Thyroid gland (tissue), 4 donors: ENCODE measurements at regions of chr5 and their contacts with region 1.

Region 1: GRCh38 chr5:172932313-172933017 is 26.8 kb upstream of the RPL26L1 start:
- DNase-seq: peak; percentile 79 to 81
- H3K4me3 ChIP-seq: no peak overlapping the region
- H3K27ac ChIP-seq: peak overlapping the region in 2 of 3 donors; percentile 27 to 67
- H3K4me1 ChIP-seq: peaks cover 4 to 20% of the 10 kb centered on the region in 2 donors
- H3K27me3 ChIP-seq: no peaks in the 10 kb centered on the region
- CTCF ChIP-seq: peak; percentile 87 to 98 (median 96)
- POLR2A ChIP-seq: no peak

Region 2: GRCh38 chr5:172713113-172713860 is 219.2 kb before region 1 on chr5:
- intact Hi-C with region 1: loop called (anchors 2 kb)
- DNase-seq: peak; percentile 58 to 67
- H3K4me3 ChIP-seq: no peak overlapping the region
- H3K27ac ChIP-seq: peak overlapping the region in 2 of 3 donors; percentile 35 to 66
- H3K4me1 ChIP-seq: peaks cover 10 to 39% of the 10 kb centered on the region in 2 donors
- H3K27me3 ChIP-seq: no peaks in the 10 kb centered on the region
- CTCF ChIP-seq: peak; percentile 72 to 93 (median 88)
- POLR2A ChIP-seq: peak in 1 of 2 donors; percentile 12

Region 3: GRCh38 chr5:173108914-173109313 is 176.4 kb after region 1 on chr5:
- intact Hi-C with region 1: no loop called
- DNase-seq: peak; percentile 4 to 17
- H3K4me3 ChIP-seq: no peak overlapping the region
- H3K27ac ChIP-seq: peak overlapping the region in 2 of 3 donors; percentile 4 to 72
- H3K4me1 ChIP-seq: peaks cover 10% of the 10 kb centered on the region in 2 donors
- H3K27me3 ChIP-seq: no peaks in the 10 kb centered on the region
- CTCF ChIP-seq: no peak
- POLR2A ChIP-seq: peak in 1 of 2 donors; percentile 13

Region 4: DNA sequence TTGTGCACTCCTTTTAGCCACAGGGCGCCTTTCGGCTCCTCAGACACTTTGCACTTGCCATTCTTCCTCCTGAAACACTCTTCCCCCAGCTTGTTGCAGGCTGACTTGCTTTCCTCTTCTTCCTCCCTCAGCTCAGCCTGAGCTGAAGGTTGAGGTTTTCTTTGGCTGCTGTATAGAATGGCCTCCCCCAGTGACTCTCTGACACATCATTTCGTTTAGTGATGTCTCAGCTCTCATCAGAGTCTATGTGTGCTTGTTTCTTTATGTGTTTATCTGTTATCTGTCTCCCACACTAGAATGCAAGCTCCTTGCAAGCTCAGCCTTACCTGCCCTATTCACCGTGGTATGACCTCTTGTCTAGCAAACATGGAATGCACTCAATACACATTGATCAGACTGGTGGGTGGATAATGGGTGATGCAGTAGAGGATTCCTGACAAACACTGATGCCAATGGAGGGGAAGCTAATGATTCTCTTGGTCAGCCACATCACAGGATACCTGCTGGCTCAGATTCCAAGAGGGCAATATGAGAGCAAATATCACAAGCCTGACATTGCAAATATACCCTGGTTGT is 508.7 kb after region 1 on chr5:
- intact Hi-C with region 1: no loop called
- DNase-seq: no peak
- H3K4me3 ChIP-seq: no peak overlapping the region
- H3K27ac ChIP-seq: no peak overlapping the region
- H3K4me1 ChIP-seq: peaks cover 0 to 9% of the 10 kb centered on the region in 2 donors
- H3K27me3 ChIP-seq: no peaks in the 10 kb centered on the region
- CTCF ChIP-seq: no peak
- POLR2A ChIP-seq: no peak